Panc1 (cell line): ENCODE measurements at regions of chr18 and their contacts with region 1.

Region 1: GRCh38 chr18:77207540-77207939 is 42.1 kb upstream of the GALR1 start:
- DNase-seq: no peak
- ATAC-seq: peak; percentile 82
- H3K4me3 ChIP-seq: peak overlapping the region in 1 of 2 experiments; percentile 29; a peak in 2 of 4 replicates
- H3K27ac ChIP-seq: peak overlapping the region; percentile 90
- H3K4me1 ChIP-seq: peaks cover 30% of the 10 kb centered on the region
- H3K27me3 ChIP-seq: no peaks in the 10 kb centered on the region
- CTCF ChIP-seq: no peak

Region 2: GRCh38 chr18:76922107-76922506 is 285.4 kb before region 1 on chr18:
- CTCF ChIA-PET with region 1: no interaction called
- POLR2A ChIA-PET with region 1: interaction called, 17 read pairs
- in situ Hi-C with region 1: no loop called
- intact Hi-C with region 1: no loop called
- DNase-seq: peak; percentile 22
- ATAC-seq: peak; percentile 96
- H3K4me3 ChIP-seq: no peak overlapping the region
- H3K27ac ChIP-seq: no peak overlapping the region
- H3K4me1 ChIP-seq: no peaks in the 10 kb centered on the region
- H3K27me3 ChIP-seq: no peaks in the 10 kb centered on the region
- CTCF ChIP-seq: peak; percentile 87

Region 3: DNA sequence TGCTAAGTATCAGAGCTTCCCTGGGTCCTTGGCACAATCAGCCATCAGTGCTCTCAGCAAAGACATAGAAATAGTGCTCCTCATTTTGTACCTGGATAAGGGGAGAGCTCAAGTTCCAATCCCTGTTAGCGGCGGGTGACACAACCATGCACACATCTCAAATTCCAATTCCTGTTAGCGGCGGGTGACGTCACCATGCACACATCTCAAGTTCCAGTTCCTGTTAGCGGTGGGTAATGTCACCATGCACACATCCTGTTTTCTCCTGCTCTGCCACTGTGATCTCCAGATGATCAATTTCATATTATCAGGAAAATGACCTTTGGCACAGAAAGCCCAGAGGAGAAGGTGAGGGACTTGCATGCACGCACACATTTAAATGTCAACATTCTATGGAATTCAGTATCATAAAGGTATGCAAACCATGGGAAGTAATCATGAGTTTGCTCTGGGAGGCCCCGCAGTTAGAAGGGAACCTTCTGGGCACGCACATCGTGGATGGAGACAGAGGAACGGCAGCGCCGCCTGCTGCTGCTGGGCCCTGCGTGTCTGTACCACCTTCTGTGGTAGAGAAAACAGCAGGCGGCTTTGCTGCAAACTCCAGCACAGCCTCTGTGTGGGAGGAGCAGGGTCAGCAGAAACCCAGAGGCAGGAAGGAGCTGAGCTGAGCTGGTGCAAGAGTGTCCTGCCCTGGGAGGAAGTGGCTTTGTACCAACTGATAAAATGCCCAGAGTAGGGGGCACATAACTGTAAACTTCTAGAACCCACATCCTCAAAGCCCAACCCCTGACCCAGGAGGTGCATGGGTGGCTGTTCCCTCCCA is 152.7 kb before region 1 on chr18:
- CTCF ChIA-PET with region 1: interaction called, 3 read pairs
- POLR2A ChIA-PET with region 1: no interaction called
- in situ Hi-C with region 1: no loop called
- intact Hi-C with region 1: loop called (anchors 5 kb)
- DNase-seq: peak; percentile 95
- ATAC-seq: peak; percentile 92
- H3K4me3 ChIP-seq: peak overlapping the region in 1 of 2 experiments; percentile 34; a peak in 2 of 4 replicates
- H3K27ac ChIP-seq: peak overlapping the region; percentile 90
- H3K4me1 ChIP-seq: peaks cover 55% of the 10 kb centered on the region
- H3K27me3 ChIP-seq: no peaks in the 10 kb centered on the region
- CTCF ChIP-seq: no peak

Region 4: DNA sequence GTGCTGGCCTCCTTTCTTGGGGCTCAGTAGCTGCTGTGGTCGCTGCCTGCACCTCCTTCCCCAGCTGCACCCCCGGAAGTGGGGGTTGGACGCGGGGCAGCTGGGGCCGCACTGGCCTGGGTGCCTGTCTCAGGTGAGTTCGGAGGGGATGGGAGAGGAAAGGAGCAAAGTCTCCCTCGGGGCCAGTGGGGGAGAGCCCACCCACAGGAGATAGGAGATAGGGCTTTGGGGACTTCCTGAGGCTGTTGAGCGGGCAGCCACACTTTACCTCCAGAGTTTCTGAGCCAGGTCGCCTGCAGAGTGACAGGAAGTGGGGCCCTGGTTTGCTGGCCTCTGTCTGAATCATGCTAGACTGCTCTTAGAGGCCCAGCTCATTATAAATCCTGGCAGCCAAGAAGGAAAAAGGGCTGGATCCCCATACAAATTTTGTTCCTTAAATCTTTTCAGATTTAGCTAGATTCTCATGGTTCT is 83.1 kb before region 1 on chr18:
- CTCF ChIA-PET with region 1: interaction called, 12 read pairs
- POLR2A ChIA-PET with region 1: no interaction called
- in situ Hi-C with region 1: no loop called
- intact Hi-C with region 1: no loop called
- DNase-seq: no peak
- ATAC-seq: peak; percentile 65
- H3K4me3 ChIP-seq: peak overlapping the region; percentile 22 to 40
- H3K27ac ChIP-seq: peak overlapping the region; percentile 97
- H3K4me1 ChIP-seq: peaks cover 99% of the 10 kb centered on the region
- H3K27me3 ChIP-seq: no peaks in the 10 kb centered on the region
- CTCF ChIP-seq: no peak

Region 5: DNA sequence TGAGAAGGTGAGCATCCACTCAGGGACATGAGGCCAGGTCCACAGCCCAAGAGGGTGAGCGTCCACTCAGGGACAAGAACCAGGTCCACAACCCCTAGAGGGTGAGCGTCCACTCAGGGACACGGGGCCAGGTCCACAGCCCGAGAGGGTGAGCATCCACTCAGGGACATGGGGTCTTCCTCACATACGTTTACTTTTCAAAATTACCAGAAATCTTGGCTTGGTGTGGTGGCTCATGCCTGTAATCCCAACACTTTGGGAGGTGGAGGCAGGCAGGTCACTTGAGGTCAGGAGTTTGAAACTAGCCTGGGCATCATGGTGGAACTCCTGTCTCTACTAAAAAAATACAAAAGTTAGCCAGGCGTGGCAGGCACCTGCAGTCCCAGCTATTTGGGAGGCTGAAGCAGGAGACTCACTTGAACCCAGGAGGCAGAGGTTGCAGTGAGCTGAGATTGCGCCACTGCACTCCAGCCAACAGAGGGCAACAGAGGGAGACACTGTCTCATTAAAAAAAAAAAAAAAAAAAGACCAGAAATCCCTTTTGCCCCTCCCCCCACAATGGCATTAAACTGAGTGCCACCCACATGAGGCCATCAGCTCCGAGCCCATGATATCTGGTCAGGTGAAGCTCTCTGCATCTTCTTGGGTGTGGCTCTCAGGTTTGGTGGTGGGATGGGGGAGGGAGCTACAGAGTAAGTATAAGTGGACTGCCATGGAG is 66.0 kb before region 1 on chr18:
- CTCF ChIA-PET with region 1: interaction called, 12 read pairs
- POLR2A ChIA-PET with region 1: interaction called, 5 read pairs
- in situ Hi-C with region 1: no loop called
- intact Hi-C with region 1: no loop called
- DNase-seq: no peak
- ATAC-seq: no peak
- H3K4me3 ChIP-seq: no peak overlapping the region
- H3K27ac ChIP-seq: no peak overlapping the region
- H3K4me1 ChIP-seq: no peaks in the 10 kb centered on the region
- H3K27me3 ChIP-seq: no peaks in the 10 kb centered on the region
- CTCF ChIP-seq: no peak